Right ventricle myocardium inferior (tissue), 1 donor: ENCODE measurements at regions of chr16 and their contacts with region 1.

Region 1: GRCh38 chr16:27315277-27316037 is 1.7 kb downstream of the IL4R start:
- DNase-seq: peak; percentile 71
- ATAC-seq: peak; percentile 18

Region 2: GRCh38 chr16:27066668-27067537 is 248.6 kb before region 1 on chr16 and contains the start of gene C16orf82:
- intact Hi-C with region 1: no loop called
- DNase-seq: no peak
- ATAC-seq: no peak
- total RNA-seq, gene C16orf82: not detected

Region 3: DNA sequence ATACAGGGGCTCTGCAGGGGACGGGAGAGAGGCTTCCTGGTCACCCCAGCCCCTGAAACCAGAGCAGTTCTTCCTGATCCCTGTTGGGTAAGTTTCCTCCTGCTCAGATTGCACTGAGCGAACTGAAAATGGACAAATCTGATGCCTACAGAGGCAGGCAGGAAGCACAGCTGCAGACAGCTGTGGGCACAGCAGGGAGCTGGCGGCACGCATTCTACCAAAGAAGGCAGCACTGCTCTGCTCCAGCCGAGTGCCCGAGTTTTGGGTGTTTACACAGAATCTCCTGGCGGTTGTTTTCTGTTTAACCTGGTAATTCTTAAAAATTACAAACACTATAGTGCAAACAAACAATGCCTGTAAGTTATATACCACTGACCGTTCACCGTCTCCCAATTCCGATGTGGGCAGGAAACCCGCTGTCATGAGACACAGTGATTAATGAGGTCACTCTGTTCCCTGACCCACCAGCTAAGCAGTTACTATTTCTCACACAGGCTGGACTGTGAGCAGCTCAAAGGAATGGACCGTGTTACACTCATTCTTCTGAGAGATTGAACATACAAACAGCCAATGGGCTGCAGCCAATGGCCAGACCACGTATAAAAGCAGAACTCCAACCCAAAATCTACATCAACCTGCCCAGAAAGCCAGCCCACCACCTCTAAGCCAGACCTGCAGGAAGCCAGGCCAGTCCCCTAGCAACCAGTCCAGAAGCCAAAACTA is 72.4 kb before region 1 on chr16:
- intact Hi-C with region 1: loop called (anchors 5 kb)
- DNase-seq: peak; percentile 57
- ATAC-seq: peak; percentile 60

Region 4: GRCh38 chr16:27268376-27269299 is 46.8 kb before region 1 on chr16 and contains the start of gene NSMCE1:
- intact Hi-C with region 1: loop called (anchors 5 kb)
- DNase-seq: peak; percentile 99
- ATAC-seq: peak; percentile 99
- total RNA-seq, gene NSMCE1: 35.8 TPM